K562 (cell line): ENCODE measurements at regions of chr12 and their contacts with region 1.

Region 1: GRCh38 chr12:3885277-3886094 is 12.3 kb upstream of the PARP11 start:
- DNase-seq: peak in 3 of 4 experiments; percentile 6 to 34 (median 7)
- ATAC-seq: no peak
- H3K4me3 ChIP-seq: no peak overlapping the region
- H3K27ac ChIP-seq: no peak overlapping the region
- H3K4me1 ChIP-seq: no peaks in the 10 kb centered on the region
- H3K27me3 ChIP-seq: no peaks in the 10 kb centered on the region; a peak in 1 of 5 replicates
- CTCF ChIP-seq: peak; percentile 44 to 66 (median 61); a peak in 5 of 6 replicates
- EP300 ChIP-seq: no peak
- POLR2A ChIP-seq: no peak
- RAD21 ChIP-seq: peak; percentile 68 to 71

Region 2: GRCh38 chr12:3872800-3873636 is 12.5 kb before region 1 on chr12 and contains the start of gene PARP11:
- CTCF ChIA-PET with region 1: no interaction called
- POLR2A ChIA-PET with region 1: no interaction called
- in situ Hi-C with region 1: no loop called
- intact Hi-C with region 1: no loop called
- DNase-seq: peak; percentile 76 to 88 (median 78)
- ATAC-seq: peak; percentile 100
- H3K4me3 ChIP-seq: peak within 1 kb of the TSS; percentile 52
- H3K27ac ChIP-seq: peak within 1 kb of the TSS; percentile 69; the same call in 2 of the 3 replicates
- H3K4me1 ChIP-seq: no peaks in the 10 kb centered on the region
- H3K27me3 ChIP-seq: no peaks in the 10 kb centered on the region
- CTCF ChIP-seq: no peak
- EP300 ChIP-seq: no peak
- POLR2A ChIP-seq: no peak
- RAD21 ChIP-seq: no peak
- polyA plus RNA-seq, gene PARP11: 0.99 to 1.5 TPM

Region 3: DNA sequence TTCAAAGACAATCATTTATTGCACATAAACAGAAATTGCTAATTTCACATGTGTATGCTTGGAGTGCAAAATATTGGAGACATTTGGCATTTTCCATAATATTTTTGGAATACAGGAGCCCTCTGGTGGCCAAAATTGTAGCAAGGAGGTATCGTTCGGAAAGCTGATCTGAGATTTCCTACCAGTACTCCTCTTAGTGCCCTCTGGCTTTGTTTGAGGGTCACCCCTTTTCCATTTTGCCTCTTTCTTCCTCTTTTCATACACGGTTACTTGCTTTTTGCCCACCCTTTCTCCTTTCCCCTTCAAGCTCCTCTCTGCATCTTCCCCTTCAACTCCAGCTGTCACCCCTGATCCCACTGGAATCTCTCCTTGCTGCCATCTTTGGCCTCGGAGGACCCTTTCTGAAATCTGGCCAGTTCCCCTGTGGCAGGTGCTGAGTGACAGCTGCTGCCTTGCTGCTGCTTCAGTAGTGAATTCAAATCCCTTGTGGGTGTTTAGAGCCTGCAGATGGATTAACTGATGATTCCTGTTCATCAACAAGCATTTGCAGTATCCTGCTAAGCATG is 152.3 kb after region 1 on chr12:
- CTCF ChIA-PET with region 1: interaction called, 9 read pairs
- POLR2A ChIA-PET with region 1: no interaction called
- in situ Hi-C with region 1: loop called (anchors 5 kb)
- intact Hi-C with region 1: loop called (anchors 1 kb)
- DNase-seq: peak; percentile 5 to 10 (median 9)
- ATAC-seq: no peak
- H3K4me3 ChIP-seq: no peak overlapping the region
- H3K27ac ChIP-seq: no peak overlapping the region
- H3K4me1 ChIP-seq: no peaks in the 10 kb centered on the region
- H3K27me3 ChIP-seq: no peaks in the 10 kb centered on the region; a peak in 1 of 5 replicates
- CTCF ChIP-seq: peak; percentile 21 to 58 (median 53); a peak in 5 of 6 replicates
- EP300 ChIP-seq: no peak
- POLR2A ChIP-seq: no peak
- RAD21 ChIP-seq: peak; percentile 46 to 58